Heart right ventricle (tissue), 16 donors: ENCODE measurements at regions of chr3 and their contacts with region 1.

Region 1: DNA sequence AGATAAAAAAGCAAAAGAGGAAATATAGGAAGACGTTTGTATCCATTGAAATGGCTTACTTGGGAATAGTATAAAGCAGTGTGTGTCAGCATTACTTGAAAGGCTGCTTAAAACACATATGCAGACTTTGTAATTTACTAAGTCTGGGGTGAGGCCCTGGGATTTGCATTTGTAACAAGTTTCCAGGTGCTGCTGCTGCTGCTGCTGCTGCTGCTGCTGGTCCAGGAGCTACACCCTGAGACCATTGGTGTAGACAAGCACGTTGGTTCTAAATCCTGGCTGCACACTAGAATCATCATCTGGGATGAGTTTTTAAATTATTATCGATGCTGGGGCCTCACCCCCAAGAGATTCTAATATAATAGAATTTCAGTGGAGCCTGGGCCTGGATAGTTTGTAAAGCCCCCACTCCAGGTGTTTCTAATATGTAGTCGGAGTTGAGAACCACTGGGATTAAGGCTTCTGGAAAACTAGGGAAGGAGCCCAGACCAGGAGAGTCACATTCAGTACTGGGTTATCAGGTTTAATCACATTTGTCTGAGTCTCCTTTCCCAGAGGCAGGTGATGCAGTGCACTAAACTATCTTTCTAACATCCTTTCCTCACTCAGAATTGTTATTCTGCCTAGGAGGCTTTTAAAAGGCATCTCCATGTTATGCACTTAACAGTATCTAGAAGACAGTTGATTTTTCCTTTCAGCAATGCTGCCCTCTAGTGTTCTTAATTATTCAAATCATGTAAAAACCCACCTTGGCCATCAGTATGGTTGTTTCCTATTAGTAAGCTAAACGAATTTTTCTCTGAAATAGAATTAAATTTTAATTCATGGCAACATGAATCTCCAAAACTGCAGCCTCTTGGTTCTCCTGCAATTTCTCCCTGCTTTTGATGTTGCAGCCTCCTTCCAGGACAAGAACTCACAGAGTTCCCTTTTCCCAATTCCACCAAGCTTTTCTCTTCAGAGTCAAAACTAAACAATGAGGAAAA is 45.4 kb downstream of the SSR3 start:
- DNase-seq: no peak
- ATAC-seq: peak; percentile 46 to 90 (median 77)
- H3K4me3 ChIP-seq: no peak overlapping the region
- H3K27ac ChIP-seq: no peak overlapping the region
- H3K4me1 ChIP-seq: no peaks in the 10 kb centered on the region
- H3K27me3 ChIP-seq: no peaks in the 10 kb centered on the region
- CTCF ChIP-seq: peak; percentile 36 to 79 (median 70)

Region 2: GRCh38 chr3:156040041-156040440 is 469.4 kb before region 1 on chr3:
- intact Hi-C with region 1: loop called in 5 of 10 experiments (anchors 10 kb)
- DNase-seq: no peak
- ATAC-seq: no peak
- H3K4me3 ChIP-seq: no peak overlapping the region
- H3K27ac ChIP-seq: no peak overlapping the region
- H3K4me1 ChIP-seq: peaks cover 0 to 6% (median 0%) of the 10 kb centered on the region in 9 donors
- H3K27me3 ChIP-seq: peaks cover 0 to 6% (median 0%) of the 10 kb centered on the region in 7 donors
- CTCF ChIP-seq: no peak

Region 3: DNA sequence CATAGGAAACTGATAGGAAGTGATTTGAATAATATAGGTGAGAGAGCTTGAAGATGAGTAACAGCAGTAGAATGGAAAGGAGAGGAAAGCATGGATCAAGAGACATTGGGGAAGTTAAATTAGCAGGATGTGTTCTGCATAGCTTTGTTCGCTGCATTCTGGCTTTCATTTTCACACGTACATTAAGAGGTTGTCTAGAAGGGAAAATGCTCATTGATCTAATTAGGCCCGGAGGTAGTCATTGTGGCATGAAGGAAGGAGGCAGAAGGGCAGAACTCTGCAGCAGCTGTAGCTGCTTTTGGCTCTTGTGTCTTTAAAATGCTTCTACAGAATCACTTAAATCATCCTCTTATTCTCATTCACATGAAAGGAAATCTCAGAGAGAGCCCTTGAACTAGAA is 348.8 kb before region 1 on chr3:
- intact Hi-C with region 1: loop called in 3 of 10 experiments (anchors 5 to 10 kb)
- DNase-seq: no peak
- ATAC-seq: no peak
- H3K4me3 ChIP-seq: no peak overlapping the region
- H3K27ac ChIP-seq: no peak overlapping the region
- H3K4me1 ChIP-seq: no peaks in the 10 kb centered on the region
- H3K27me3 ChIP-seq: no peaks in the 10 kb centered on the region
- CTCF ChIP-seq: no peak

Region 4: GRCh38 chr3:156166808-156167207 is 342.7 kb before region 1 on chr3:
- intact Hi-C with region 1: loop called in 3 of 10 experiments (anchors 5 kb)
- DNase-seq: no peak
- ATAC-seq: no peak
- H3K4me3 ChIP-seq: no peak overlapping the region
- H3K27ac ChIP-seq: no peak overlapping the region
- H3K4me1 ChIP-seq: no peaks in the 10 kb centered on the region
- H3K27me3 ChIP-seq: no peaks in the 10 kb centered on the region
- CTCF ChIP-seq: no peak

Region 5: DNA sequence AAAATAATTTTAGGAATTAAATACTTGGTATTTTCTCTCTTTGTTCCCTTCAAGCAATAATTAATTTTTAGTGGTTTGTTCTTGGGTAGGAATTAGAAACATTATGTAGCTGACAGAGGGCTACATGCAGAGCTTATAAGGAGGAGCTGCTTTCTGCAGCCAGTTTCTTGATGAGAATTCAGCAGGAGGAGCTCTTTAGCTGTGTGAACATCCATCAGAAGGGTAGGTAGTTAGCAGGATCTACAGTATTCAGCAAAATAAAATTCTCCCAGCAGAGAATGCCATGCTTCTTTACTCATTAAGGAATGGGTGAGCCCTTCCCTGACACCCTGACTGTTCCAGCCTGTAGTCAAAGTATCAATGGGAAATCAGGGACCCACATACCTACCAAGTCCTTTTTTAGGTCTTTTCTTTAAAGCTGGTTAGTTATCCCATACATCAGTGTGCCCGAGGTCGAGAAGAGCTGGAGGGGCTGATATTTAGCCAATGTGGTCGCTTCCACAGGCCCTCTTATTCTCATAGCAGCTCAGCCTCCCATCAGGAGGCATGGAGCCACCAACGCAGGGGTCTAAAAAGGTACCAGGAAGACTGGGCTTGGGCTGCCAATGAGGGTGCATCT is 335.1 kb before region 1 on chr3:
- intact Hi-C with region 1: loop called in 3 of 10 experiments (anchors 2 to 5 kb)
- DNase-seq: no peak
- ATAC-seq: peak in 5 of 8 donors; percentile 51 to 83 (median 81)
- H3K4me3 ChIP-seq: no peak overlapping the region
- H3K27ac ChIP-seq: no peak overlapping the region
- H3K4me1 ChIP-seq: no peaks in the 10 kb centered on the region
- H3K27me3 ChIP-seq: no peaks in the 10 kb centered on the region
- CTCF ChIP-seq: peak in 6 of 9 donors; percentile 32 to 57 (median 43)

Region 6: DNA sequence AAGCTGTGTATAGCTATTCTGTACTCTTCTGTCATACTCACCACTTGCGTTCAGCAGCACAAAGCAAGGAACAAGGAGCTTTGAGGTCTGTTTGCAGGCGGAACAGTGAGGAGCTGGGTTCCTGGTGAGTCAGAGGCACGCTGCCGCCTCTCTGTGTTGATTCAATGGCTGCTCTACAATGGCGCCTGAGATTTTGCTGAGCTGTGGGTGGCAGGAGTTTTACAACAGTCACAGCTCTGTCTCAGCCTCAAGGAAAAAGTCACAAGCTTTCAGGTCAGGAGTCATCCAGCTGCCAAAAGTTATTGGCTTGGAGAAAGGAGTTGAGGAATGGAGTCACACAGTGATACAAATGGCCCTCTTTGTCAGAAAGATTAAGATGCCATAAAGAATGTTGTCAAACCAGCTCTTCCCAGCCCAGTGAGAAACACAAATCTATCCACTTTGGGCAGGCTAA is 52.7 kb before region 1 on chr3:
- intact Hi-C with region 1: loop called in 2 of 10 experiments (anchors 5 kb)
- DNase-seq: no peak
- ATAC-seq: no peak
- H3K4me3 ChIP-seq: no peak overlapping the region
- H3K27ac ChIP-seq: no peak overlapping the region
- H3K4me1 ChIP-seq: peaks cover 0 to 18% (median 7%) of the 10 kb centered on the region in 9 donors
- H3K27me3 ChIP-seq: no peaks in the 10 kb centered on the region
- CTCF ChIP-seq: no peak

Region 7: GRCh38 chr3:156888176-156888575 is 378.7 kb after region 1 on chr3:
- intact Hi-C with region 1: no loop called
- DNase-seq: no peak
- ATAC-seq: no peak
- H3K4me3 ChIP-seq: no peak overlapping the region
- H3K27ac ChIP-seq: no peak overlapping the region
- H3K4me1 ChIP-seq: peaks cover 0 to 6% (median 0%) of the 10 kb centered on the region in 9 donors
- H3K27me3 ChIP-seq: no peaks in the 10 kb centered on the region
- CTCF ChIP-seq: no peak